RWPE1 (cell line): ENCODE measurements at regions of chr9 and their contacts with region 1.

Region 1: GRCh38 chr9:126558051-126558665 is 55.6 kb upstream of the LMX1B start:
- DNase-seq: peak; percentile 92
- H3K27ac ChIP-seq: no peak overlapping the region
- CTCF ChIP-seq: peak; percentile 99

Region 2: DNA sequence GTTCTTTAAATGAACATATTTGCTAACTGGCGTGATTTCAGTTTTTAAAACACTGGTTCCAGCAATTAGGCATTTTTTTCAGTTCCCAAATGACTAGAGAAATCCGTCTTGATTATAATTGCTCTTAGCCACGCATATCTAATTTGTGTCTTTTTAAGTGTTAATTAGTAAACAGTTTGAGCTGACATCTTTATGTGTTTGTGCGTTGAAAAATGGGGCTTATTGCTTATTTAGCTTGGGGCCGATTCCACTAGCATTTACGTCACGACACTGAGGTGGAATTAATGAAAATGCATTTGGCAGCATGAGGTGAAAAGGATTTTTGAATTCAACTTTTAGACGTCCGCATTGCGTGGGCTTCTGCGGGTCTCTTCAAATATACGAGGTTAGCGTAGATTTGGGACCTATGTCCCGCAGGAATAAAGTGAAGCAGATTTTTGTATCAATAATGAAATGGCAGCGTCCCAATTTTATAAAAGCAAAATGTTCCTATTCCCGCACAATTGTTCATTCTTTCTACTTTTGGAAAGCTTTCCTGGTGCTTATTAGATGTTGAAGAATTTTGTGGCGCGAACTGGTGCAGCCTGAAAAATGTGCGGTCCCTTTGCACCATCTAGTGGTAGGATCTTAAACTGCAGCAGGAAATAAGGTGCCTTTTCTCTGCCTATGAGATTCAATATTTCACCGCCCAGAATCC is 67.1 kb before region 1 on chr9:
- CTCF ChIA-PET with region 1: interaction called, 19 read pairs
- POLR2A ChIA-PET with region 1: no interaction called
- DNase-seq: peak; percentile 70
- H3K27ac ChIP-seq: no peak overlapping the region
- CTCF ChIP-seq: peak; percentile 99

Region 3: DNA sequence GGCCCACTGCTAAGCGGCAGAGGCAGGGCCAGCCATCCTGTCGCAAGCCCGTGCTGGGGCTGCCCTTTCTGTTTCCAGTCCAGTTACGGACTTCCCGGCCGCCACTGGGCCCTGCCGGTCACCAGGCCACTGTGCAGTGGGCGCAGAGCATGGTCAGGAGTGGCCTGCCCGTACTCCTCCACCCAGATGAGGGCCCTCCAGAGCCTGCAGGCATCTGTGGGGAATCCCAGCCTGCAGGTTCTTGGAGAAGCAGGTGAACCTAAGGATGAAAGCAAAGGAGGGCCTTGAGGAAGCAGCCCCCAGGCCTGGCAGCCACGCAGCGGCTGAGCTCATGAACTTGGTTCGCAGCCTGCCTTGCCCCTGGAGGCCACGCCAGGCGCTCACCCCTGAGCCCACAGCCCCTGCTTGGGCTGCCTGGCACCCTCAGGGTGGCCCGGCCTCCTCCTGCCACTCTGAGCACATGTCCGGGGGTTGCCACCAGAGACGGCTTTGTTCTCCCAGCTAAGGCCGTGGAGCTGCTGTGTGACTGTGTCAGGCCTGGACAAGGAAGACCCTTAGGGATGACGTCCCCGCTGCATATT is 51.7 kb before region 1 on chr9:
- CTCF ChIA-PET with region 1: interaction called, 299 read pairs
- POLR2A ChIA-PET with region 1: no interaction called
- DNase-seq: no peak
- H3K27ac ChIP-seq: no peak overlapping the region
- CTCF ChIP-seq: no peak

Region 4: GRCh38 chr9:126519660-126520420 is 38.3 kb before region 1 on chr9:
- CTCF ChIA-PET with region 1: interaction called, 52 read pairs
- POLR2A ChIA-PET with region 1: no interaction called
- DNase-seq: no peak
- H3K27ac ChIP-seq: no peak overlapping the region
- CTCF ChIP-seq: no peak

Region 5: DNA sequence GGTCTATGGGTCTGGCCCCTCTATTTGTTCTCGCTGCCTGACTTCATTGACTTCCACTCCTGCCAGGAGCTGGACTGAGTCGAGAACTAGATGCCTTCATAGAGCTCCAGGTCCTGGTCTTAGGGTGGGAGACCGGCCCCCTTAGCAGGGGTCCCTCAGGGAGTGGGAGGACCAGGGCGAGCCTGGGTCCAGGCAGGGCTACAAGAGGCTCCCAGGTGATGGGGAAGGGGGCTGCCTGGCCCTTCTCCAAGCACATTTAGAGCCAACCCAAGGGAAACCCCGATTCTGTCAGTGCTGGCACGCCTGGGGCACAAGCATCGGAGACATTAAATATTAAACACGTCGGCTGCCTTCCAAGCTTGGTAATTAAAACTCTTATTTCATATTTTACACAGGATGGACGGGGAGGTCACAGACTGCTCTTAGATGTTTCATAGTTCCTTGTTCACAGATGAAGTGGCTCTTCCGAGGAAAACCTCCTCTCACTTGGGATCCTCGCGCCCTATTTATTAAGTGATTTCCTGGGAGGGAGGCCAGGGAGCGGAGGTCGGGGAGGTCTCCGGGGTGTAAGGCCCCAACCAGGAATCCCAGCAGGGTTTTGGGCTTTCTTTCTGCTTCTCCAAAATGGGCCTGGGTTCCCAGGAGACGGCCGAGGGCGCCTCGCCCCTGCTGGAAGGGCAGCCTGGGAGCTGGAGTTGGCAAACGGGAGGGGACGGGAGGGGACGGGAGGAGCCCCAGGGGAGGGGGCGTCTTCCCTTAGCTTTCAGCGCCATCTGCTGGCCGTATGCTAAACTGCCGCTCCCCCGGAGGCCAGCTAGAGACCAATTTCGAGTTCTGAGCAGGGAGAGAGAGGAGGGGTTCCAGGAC is 223.3 kb after region 1 on chr9:
- CTCF ChIA-PET with region 1: interaction called, 10 read pairs
- POLR2A ChIA-PET with region 1: no interaction called
- DNase-seq: peak; percentile 95
- H3K27ac ChIP-seq: no peak overlapping the region
- CTCF ChIP-seq: peak; percentile 99

Region 6: DNA sequence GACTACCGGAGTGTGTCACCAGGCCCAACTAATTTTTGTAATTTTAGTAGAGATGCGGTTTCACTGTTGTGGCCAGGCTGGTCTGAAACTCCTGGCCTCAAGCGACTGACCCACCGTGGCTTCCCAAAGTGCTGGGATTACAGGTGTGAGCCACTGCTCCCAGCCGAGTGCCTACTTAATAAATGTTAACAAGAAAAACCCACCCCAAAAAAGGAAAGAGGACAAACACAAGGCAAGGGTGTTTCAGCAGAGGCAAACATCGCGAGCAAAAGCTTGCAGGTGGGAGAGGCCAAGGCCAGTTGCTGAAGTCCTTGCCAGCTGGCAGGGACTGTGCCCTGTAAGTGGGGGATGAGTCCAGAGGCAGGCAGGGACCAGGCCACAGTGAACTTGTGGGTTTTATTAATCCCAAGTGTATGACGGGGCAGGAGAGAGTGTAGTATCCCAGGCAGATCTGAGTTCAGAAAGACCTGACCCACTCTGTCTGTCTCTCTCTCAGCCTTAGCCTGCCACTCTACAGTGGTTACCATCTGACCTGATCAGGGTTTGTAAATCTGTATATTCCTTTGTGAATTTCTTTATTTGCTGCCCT is 1238.2 kb after region 1 on chr9:
- CTCF ChIA-PET with region 1: no interaction called
- POLR2A ChIA-PET with region 1: no interaction called
- DNase-seq: no peak
- H3K27ac ChIP-seq: peak overlapping the region; percentile 72
- CTCF ChIP-seq: no peak